ENCODE measurements at regions of chr13 and their contacts with region 1.

Region 1: DNA sequence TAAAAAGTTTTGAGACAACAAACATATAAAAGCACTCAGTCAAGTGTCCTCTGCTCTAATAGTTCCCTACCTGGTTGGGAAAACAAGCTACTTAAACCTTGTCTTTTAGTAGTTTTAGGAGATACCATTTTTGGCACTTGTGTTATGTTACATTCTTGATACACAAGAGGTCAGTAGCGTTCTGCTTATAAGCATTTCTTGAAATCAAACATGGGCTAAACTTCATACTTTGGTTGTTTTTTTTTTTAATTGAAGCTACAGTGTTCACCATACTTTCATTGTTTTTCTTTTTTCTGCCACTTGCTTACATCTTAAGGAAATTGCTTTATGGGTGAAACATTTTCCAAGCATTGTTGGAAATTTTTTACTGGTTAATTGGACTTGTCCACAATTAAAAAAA is 12.9 kb downstream of the NHLRC3 start:
- DNase-seq: no peak
- ATAC-seq: no peak
- H3K4me3 Mint-ChIP-seq: no peak overlapping the region
- H3K27ac Mint-ChIP-seq: no peak overlapping the region
- H3K4me1 Mint-ChIP-seq: peaks cover 6% of the 10 kb centered on the region
- H3K27me3 Mint-ChIP-seq: no peaks in the 10 kb centered on the region
- CTCF ChIP-seq: peak; percentile 47

Region 2: GRCh38 chr13:39032150-39032549 is 19.0 kb before region 1 on chr13:
- CTCF ChIA-PET with region 1: no interaction called
- POLR2A ChIA-PET with region 1: no interaction called
- intact Hi-C with region 1: no loop called
- DNase-seq: no peak
- ATAC-seq: no peak
- H3K4me3 Mint-ChIP-seq: no peak overlapping the region
- H3K27ac Mint-ChIP-seq: peak overlapping the region; percentile 22
- H3K4me1 Mint-ChIP-seq: peaks cover 34% of the 10 kb centered on the region
- H3K27me3 Mint-ChIP-seq: no peaks in the 10 kb centered on the region
- CTCF ChIP-seq: no peak

Region 3: GRCh38 chr13:39263033-39263432 is 211.9 kb after region 1 on chr13:
- CTCF ChIA-PET with region 1: interaction called, 5 read pairs
- POLR2A ChIA-PET with region 1: no interaction called
- intact Hi-C with region 1: loop called (anchors 2 kb)
- DNase-seq: peak; percentile 64
- ATAC-seq: peak; percentile 83
- H3K4me3 Mint-ChIP-seq: no peak overlapping the region
- H3K27ac Mint-ChIP-seq: no peak overlapping the region
- H3K4me1 Mint-ChIP-seq: peaks cover 17% of the 10 kb centered on the region
- H3K27me3 Mint-ChIP-seq: peaks cover 8% of the 10 kb centered on the region
- CTCF ChIP-seq: peak; percentile 57